B cell (primary cell): ENCODE measurements at regions of chr3 and their contacts with region 1.

Region 1: DNA sequence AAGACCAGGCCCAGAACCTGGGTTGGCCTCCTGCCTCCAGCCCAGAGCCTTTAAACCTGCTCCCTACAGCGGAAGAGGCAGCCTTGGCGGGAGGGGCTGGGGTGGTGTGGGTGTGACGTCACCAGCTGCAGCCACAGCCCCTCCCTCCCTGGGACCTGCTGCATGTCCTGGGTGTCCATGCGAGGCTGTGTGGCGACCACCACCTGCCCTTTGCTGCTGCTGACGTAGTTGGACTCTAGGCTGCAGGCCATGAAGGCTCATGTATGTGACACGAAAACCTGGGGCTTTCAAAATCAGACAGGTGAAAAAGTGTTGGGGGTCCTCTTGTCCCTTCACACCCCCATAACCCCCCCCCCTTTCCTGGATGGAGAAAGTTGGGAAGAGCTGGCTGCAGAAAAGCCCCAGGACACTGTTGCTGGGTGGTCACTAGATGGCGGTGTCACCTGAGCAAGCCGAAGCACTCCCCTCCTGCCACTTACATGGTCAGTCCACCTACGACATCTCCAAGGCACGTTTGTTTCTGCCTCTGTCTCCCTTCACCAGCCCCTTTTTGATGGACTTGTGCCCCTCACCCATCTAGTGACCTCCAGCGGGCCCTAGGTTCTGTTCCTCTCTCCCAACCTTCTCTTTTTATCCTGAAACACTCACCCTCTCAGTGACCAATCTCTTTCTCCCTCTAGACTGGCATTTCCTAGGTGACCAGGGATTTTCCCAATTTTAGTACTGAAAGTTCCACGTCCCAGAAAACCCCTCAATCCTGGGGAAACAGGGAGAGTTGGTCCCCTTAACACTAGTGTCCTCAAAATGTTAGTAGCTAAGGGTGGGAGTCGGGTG is 35.2 kb downstream of the SLC6A20 start:
- DNase-seq: peak; percentile 63
- ATAC-seq: peak; percentile 58
- H3K4me3 ChIP-seq: no peak overlapping the region
- H3K4me3 Mint-ChIP-seq: no peak overlapping the region
- H3K27ac ChIP-seq: no peak overlapping the region
- H3K27ac Mint-ChIP-seq: no peak overlapping the region
- H3K4me1 ChIP-seq: peaks cover 0 to 5% of the 10 kb centered on the region in 2 donors
- H3K4me1 Mint-ChIP-seq: peaks cover 2% of the 10 kb centered on the region
- H3K27me3 ChIP-seq: peaks cover 0 to 2% (median 0%) of the 10 kb centered on the region in 4 experiments
- H3K27me3 Mint-ChIP-seq: peaks cover 13% of the 10 kb centered on the region
- CTCF ChIP-seq: peak; percentile 66

Region 2: GRCh38 chr3:45906681-45907407 is 145.7 kb after region 1 on chr3:
- CTCF ChIA-PET with region 1: interaction called, 3 read pairs
- POLR2A ChIA-PET with region 1: no interaction called
- intact Hi-C with region 1: loop called (anchors 1 kb)
- DNase-seq: no peak
- ATAC-seq: no peak
- H3K4me3 ChIP-seq: no peak overlapping the region
- H3K4me3 Mint-ChIP-seq: peak overlapping the region; percentile 42
- H3K27ac ChIP-seq: no peak overlapping the region
- H3K27ac Mint-ChIP-seq: peak overlapping the region; percentile 80
- H3K4me1 ChIP-seq: peaks cover 16 to 46% of the 10 kb centered on the region in 2 donors
- H3K4me1 Mint-ChIP-seq: peaks cover 53% of the 10 kb centered on the region
- H3K27me3 ChIP-seq: no peaks in the 10 kb centered on the region
- H3K27me3 Mint-ChIP-seq: no peaks in the 10 kb centered on the region
- CTCF ChIP-seq: no peak

Region 3: GRCh38 chr3:45929042-45929679 is 168.1 kb after region 1 on chr3:
- CTCF ChIA-PET with region 1: interaction called, 84 read pairs
- POLR2A ChIA-PET with region 1: interaction called, 3 read pairs
- intact Hi-C with region 1: no loop called
- DNase-seq: peak; percentile 70
- ATAC-seq: peak; percentile 81
- H3K4me3 ChIP-seq: no peak overlapping the region
- H3K4me3 Mint-ChIP-seq: no peak overlapping the region
- H3K27ac ChIP-seq: no peak overlapping the region
- H3K27ac Mint-ChIP-seq: no peak overlapping the region
- H3K4me1 ChIP-seq: no peaks in the 10 kb centered on the region
- H3K4me1 Mint-ChIP-seq: no peaks in the 10 kb centered on the region
- H3K27me3 ChIP-seq: no peaks in the 10 kb centered on the region
- H3K27me3 Mint-ChIP-seq: no peaks in the 10 kb centered on the region
- CTCF ChIP-seq: peak; percentile 81